ENCODE measurements at regions of chr14 and their contacts with region 1.

Region 1: DNA sequence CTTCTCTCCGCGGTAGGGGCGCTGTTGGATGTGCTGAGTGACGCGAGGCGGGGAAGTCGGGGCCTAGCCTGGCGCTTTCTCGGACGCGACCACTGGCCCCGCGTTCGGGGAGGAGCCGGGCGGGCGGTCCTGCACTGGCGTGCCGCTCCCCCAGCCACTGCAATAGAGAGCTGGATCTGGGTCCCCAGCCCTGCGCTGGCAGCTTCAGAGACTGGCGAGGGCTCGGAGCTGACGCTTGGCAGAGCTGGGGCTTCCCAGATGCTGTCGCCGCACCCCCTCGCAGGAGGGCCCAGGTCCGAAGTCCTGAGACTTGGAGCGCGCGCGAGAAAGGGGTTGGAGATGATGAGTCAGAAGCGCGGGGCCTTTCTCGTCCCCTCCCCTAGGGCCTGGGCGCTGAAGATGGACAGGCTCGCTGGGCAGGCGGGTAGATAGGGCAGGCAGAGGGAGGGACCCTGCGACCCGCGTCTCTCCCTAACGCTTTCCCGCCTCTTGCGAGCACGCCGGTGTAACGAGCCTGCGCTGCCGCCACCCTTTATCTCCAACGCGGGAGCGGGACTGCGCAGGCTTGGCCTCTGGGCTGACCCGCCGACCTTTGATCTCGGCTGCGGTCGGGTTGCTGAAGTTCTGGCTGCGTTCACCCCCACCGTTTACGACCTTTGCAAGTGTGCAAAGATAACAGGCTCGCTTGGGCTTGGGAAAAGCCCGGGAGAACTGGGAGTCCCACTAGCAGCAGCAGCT is 3.0 kb downstream of the TMEM253 start:
- DNase-seq: peak; percentile 91 to 95
- H3K4me3 ChIP-seq: peak overlapping the region; percentile 54
- H3K4me1 ChIP-seq: peaks cover 37% of the 10 kb centered on the region
- H3K27me3 ChIP-seq: no peaks in the 10 kb centered on the region

Region 2: GRCh38 chr14:20956376-20956976 is 147.4 kb before region 1 on chr14:
- in situ Hi-C with region 1: no loop called
- DNase-seq: no peak
- H3K4me3 ChIP-seq: no peak overlapping the region
- H3K4me1 ChIP-seq: peaks cover 4% of the 10 kb centered on the region
- H3K27me3 ChIP-seq: peaks cover 17% of the 10 kb centered on the region

Region 3: DNA sequence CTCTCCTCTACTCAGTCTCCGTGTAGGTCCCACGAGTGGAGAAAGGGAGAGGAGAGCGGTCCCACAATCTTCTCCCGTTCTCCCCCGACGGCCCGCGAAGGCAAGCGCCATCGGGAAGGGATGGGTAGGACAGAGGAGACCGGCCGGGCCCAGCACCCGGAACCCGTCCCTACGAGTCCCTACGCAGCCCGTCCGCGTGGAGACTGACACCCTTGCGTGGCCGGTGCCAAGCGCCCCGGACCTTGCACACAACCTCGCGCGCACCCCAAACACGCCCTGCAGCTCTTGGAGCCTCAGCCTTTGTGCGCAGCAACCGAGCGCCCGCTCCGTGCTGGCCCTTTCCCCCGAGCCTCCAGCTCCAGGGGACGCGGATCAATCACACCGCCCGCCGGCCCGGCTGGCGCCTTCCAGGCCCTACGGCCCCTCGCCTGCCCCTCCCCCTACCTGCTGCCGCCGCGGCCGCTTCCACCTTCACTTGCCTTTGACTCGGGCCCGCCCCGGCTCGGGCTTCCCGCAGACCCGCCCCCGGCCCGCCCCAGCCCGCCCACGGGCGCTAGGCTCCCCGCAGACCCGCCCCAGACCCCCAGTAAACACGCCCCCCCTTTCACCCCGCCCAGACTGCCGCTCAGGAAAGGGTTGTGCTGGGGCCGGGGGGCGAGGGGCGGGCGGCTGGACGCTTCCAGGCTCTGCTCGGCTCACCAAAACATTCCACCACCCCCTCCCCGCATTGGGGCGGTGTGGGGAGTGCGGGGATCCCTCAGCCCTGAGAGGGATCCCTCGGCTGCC is 79.1 kb before region 1 on chr14 and contains the start of gene NDRG2:
- in situ Hi-C with region 1: loop called (anchors 5 kb)
- DNase-seq: peak; percentile 75 to 94
- H3K4me3 ChIP-seq: peak within 1 kb of the TSS; percentile 68
- H3K4me1 ChIP-seq: peaks cover 5% of the 10 kb centered on the region
- H3K27me3 ChIP-seq: no peaks in the 10 kb centered on the region